B cell (primary cell): ENCODE measurements at regions of chr15 and their contacts with region 1.

Region 1: DNA sequence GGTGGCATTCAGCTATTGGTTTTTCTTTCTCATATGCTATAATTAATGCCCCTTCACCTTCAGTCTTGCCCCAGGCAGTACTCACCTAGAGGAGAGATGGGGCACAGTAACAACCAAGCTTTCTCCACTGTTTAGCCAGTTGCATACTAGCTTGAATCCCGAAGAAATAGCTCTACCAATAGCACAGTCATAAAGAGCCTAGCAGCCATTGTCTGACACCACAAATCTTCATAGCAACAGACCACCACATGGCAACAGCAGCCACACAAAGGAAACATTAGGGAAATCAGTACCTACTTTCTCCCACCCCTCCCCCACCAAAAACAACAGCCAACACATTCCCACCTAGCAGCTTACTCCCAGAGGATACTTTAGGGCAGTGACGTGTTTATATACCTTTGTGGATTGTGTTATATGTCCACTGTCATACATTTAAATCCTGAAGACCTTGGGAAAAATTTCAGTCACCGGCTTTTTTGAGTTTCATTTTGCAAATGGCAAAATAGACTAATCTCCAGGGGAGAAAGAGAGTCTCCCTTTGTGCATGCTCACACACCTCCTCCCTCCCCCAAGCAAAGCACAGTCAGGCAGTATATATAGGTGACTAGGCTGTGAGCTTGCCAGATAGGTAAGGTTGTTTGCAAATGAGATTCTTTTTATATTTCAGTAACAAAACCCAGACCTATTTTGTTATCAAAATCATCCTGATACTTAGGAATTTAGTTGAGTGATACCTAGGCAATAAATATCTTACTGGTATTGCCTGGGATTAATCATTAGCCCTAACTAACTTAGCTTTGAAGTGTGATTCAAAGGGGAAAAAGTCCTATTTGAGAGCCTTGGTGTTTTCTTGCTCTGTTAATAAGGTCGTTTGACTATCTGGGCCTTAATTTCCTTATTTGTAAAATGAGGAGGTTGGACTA is 140.6 kb downstream of the RBPMS2 start:
- DNase-seq: no peak
- ATAC-seq: no peak
- H3K4me3 ChIP-seq: no peak overlapping the region
- H3K4me3 Mint-ChIP-seq: peak overlapping the region; percentile 1
- H3K27ac ChIP-seq: no peak overlapping the region
- H3K27ac Mint-ChIP-seq: no peak overlapping the region
- H3K4me1 ChIP-seq: peaks cover 16 to 23% of the 10 kb centered on the region in 2 donors
- H3K4me1 Mint-ChIP-seq: peaks cover 29% of the 10 kb centered on the region
- H3K27me3 ChIP-seq: no peaks in the 10 kb centered on the region
- H3K27me3 Mint-ChIP-seq: no peaks in the 10 kb centered on the region
- CTCF ChIP-seq: no peak

Region 2: DNA sequence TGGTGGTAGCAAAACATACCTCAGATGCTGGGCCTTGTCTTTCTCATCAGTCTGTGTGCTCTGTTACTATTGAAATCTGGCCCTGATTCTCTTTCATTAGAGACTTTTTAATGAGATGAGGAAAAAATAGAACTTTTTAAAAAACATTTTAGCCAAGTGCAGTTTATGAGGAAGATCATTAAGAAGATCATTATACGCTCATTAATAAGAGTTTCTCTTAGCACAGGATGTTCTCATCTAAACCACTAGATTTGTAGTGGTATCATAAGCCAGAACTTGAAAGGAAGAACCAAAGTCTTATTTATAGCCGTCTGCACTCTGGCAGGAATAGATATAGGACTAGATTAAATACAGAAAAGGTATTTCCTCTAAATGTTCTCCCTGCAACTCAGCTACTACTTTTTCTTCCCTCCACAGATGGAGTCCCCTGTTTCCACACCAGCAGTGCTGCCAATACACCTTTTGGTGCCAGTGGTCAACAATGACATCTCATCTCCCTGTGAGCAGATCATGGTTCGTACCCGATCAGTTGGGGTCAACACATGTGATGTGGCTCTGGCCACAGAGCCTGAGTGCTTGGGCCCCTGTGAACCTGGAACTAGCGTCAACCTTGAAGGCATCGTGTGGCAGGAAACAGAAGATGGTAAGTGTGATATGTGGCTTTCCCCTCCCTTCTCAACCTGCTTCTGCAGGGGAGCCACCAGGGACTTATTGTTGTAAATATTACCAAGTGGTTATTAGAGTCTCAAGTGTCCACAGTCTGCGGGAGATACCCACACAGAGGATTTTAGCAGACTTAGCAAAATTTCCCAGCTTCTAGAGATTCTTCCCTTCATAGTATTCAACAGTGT is 12.2 kb before region 1 on chr15:
- CTCF ChIA-PET with region 1: no interaction called
- POLR2A ChIA-PET with region 1: no interaction called
- intact Hi-C with region 1: loop called (anchors 2 kb)
- DNase-seq: peak; percentile 52
- ATAC-seq: peak; percentile 69
- H3K4me3 ChIP-seq: peak overlapping the region in 1 of 5 experiments; percentile 8
- H3K4me3 Mint-ChIP-seq: peak overlapping the region; percentile 69
- H3K27ac ChIP-seq: peak overlapping the region; percentile 61 to 79
- H3K27ac Mint-ChIP-seq: peak overlapping the region; percentile 91
- H3K4me1 ChIP-seq: peaks cover 39 to 45% of the 10 kb centered on the region in 2 donors
- H3K4me1 Mint-ChIP-seq: peaks cover 48% of the 10 kb centered on the region
- H3K27me3 ChIP-seq: no peaks in the 10 kb centered on the region
- H3K27me3 Mint-ChIP-seq: no peaks in the 10 kb centered on the region
- CTCF ChIP-seq: no peak